ENCODE measurements at regions of chr17 and their contacts with region 1.

Region 1: DNA sequence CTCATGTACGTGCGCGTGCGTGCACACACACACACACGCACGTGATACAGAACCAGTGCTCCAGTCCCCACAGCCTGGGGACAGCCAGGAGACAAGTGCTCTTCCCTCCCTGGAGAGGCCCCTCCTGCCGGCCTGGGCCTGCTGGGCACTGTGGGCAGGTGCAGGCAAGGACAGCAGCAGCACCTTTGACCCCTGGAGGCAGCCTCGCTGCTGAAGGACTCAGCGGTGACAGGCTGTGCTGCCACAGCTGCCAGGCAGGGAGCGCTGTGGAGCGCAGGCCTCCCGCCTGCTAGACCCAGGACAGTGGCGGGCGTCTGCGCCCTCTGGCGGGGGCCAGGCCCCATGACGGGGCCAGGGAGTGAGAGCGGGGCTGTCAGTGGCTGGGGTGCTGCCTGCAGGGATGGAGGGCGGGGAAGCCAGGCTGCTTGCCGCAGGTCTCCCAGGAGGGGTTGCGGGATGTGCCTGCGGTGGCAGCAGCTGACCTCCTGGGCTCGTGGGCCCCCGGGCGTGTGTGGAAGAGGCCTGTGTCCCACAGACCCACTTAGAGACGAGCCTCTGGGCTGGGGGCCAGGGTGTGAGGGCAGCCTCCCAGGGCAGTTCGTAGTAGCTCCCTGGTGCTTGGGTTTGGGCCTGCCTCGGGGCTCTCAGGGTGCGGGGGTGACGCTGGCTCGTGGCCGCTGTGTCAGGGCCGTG is 63.5 kb upstream of the PVALEF start:
- DNase-seq: peak; percentile 98
- CTCF ChIP-seq: peak; percentile 100

Region 2: GRCh38 chr17:80984749-80985148 is 117.0 kb before region 1 on chr17:
- CTCF ChIA-PET with region 1: interaction called, 29 read pairs
- POLR2A ChIA-PET with region 1: no interaction called
- DNase-seq: no peak
- CTCF ChIP-seq: no peak

Region 3: DNA sequence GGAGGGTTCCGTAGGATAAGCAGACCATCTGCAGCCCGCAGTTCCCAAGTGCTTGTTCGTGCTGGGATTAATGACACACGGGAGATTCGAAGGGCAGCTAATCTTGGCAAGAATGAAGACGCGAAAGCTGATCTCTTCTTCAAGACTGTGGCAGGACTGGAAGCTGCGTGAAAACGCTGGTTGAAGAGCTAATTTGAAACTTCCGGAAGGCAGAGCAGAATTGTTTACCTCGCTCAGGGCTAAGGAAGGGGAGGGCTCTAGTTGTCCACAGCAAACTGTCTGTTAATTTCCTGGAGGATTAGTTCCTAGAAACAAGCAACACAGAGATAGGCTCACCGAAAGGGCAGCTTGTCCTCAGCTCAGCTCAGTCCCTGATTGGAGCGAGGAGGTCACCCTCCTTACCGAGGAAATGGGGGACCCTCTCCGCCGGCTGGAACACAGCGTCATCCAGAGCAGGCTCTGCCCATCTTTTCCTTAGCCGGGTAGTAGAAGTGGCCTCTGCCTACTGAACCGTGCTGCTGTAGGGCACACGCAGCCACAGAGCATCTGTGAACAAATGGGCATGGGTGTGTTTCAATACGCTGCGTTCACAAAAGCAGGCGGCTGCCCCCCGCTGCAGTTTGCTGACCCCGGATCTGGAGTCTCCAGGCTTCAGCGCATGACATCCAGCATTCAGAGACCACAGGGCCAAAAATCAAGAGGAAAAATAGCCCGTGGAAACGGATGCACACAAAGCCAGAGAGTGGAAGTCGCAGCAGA is 83.5 kb before region 1 on chr17:
- CTCF ChIA-PET with region 1: interaction called, 37 read pairs
- POLR2A ChIA-PET with region 1: no interaction called
- DNase-seq: no peak
- CTCF ChIP-seq: no peak

Region 4: GRCh38 chr17:81025741-81026129 is 76.0 kb before region 1 on chr17:
- CTCF ChIA-PET with region 1: interaction called, 37 read pairs
- POLR2A ChIA-PET with region 1: no interaction called
- DNase-seq: no peak
- CTCF ChIP-seq: no peak

Region 5: GRCh38 chr17:81086789-81087551 is 14.8 kb before region 1 on chr17:
- CTCF ChIA-PET with region 1: interaction called, 12 read pairs
- POLR2A ChIA-PET with region 1: no interaction called
- DNase-seq: no peak
- CTCF ChIP-seq: no peak

Region 6: DNA sequence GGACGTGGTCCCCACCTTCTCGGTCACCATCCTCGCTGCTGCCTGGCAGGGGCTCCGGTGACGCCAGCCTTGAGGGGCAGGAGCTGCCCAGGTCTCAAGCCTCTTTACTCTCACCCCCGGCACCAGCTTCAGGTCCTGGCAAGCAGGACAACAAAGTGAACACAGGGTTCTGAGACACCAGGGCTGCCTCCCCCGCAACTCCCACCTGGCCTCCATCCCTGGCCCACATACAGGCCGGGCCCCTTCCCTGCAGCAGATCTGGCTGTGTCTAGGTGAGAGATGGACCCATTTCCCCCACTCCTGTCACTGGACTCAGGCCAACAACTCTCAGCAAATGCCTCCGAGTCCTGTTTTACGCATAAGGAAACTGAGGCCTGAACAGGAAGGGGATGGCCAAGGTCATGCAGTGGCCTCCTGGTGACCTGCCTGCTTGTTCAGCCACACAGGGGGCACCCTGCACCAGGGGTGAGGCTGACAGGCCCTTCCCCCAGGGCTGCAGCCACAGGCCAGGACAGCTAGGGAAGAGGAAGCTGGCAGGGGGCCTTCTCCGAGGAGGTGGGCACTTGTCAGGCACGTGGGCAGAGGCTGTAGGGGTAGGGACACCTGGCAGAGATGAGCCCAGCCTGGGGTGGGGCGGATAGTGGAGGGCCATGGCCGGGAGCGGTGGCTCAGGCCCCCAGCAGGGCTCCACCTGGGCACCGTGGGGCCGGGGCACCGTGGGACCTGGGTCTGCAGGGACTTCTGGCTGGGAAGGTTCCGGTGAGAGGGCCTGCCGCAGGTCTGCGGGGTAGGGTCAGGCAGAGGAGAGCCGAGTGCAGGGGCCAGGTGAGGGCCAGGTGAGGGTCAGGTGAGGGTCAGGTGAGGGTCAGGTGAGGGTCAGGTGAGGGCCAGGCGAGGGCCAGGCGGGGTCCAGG is 16.8 kb after region 1 on chr17:
- CTCF ChIA-PET with region 1: interaction called, 16 read pairs
- POLR2A ChIA-PET with region 1: no interaction called
- DNase-seq: no peak
- CTCF ChIP-seq: no peak